Heart right ventricle (tissue), 16 donors: ENCODE measurements at regions of chr5 and their contacts with region 1.

Region 1: DNA sequence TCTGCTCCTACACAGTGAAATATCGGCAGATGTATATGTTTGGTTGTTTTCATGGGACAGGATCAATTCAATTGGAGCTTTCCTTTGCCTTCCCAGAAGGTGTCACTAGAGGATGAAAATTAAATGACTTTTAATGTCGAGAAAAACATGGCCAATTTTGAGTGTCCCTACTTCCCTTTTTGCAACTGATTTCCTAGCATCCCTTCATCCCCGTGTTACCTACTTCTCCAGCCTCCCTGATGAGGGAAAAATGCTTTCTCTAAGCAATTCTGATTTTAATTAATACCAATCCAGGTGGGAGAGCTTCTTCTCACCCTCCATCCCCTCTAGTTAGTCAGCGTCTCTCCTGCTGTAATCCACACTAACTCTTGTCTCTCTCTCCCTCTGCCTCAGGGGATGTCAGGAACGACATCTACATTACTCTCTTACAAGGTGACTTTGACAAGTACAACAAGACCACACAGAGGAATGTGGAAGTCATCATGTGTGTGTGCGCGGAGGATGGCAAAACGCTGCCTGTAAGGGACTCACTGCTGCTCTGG is 64.9 kb downstream of the DOCK2 start:
- DNase-seq: no peak
- ATAC-seq: peak in 2 of 8 donors; percentile 42 to 50
- H3K4me3 ChIP-seq: no peak overlapping the region
- H3K27ac ChIP-seq: no peak overlapping the region
- H3K4me1 ChIP-seq: peaks cover 0 to 4% (median 0%) of the 10 kb centered on the region in 9 donors
- H3K27me3 ChIP-seq: peaks cover 0 to 6% (median 0%) of the 10 kb centered on the region in 7 donors
- CTCF ChIP-seq: peak; percentile 17 to 64 (median 48)

Region 2: GRCh38 chr5:169567079-169567478 is 134.9 kb before region 1 on chr5:
- intact Hi-C with region 1: no loop called
- DNase-seq: no peak
- ATAC-seq: no peak
- H3K4me3 ChIP-seq: no peak overlapping the region
- H3K27ac ChIP-seq: no peak overlapping the region
- H3K4me1 ChIP-seq: no peaks in the 10 kb centered on the region
- H3K27me3 ChIP-seq: peaks cover 0 to 65% (median 15%) of the 10 kb centered on the region in 7 donors
- CTCF ChIP-seq: no peak

Region 3: DNA sequence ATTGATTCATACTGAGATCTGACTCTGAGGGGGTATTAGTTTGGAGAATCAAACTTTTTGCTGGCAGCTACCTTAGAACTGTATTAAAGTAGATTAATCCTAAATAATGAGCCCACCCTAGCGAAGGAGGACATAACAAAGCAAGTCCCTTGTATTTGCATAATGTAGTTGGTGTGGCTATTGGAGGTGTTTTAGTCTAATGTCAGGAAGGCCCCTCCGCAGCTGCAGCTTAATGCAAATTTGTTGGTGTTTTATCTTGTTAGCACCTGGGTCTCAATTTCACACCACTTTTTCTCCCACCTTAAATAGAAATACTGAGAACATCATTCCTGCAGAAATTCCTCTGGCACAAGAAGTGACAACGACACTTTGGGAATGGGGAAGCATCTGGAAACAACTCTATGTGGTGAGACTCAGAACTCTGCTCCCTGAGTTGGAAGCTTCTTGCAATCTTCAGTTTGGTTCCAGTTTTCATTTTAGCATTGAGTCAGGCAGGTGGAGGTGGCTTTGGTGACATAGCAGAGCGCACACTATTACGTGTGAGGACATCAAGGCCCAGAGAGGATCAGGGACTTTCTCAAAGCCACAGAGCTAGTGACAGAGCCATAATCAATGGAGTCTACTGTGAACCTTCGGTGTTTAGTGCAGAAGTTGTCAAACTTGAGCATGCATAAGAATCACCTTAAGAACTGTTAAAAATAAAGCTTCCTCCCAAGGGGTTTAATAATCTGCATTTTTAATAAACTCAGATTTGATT is 31.0 kb before region 1 on chr5:
- intact Hi-C with region 1: loop called in 1 of 10 experiments (anchors 2 kb)
- DNase-seq: no peak
- ATAC-seq: no peak
- H3K4me3 ChIP-seq: no peak overlapping the region
- H3K27ac ChIP-seq: no peak overlapping the region
- H3K4me1 ChIP-seq: no peaks in the 10 kb centered on the region
- H3K27me3 ChIP-seq: peaks cover 0 to 6% (median 0%) of the 10 kb centered on the region in 7 donors
- CTCF ChIP-seq: no peak

Region 4: DNA sequence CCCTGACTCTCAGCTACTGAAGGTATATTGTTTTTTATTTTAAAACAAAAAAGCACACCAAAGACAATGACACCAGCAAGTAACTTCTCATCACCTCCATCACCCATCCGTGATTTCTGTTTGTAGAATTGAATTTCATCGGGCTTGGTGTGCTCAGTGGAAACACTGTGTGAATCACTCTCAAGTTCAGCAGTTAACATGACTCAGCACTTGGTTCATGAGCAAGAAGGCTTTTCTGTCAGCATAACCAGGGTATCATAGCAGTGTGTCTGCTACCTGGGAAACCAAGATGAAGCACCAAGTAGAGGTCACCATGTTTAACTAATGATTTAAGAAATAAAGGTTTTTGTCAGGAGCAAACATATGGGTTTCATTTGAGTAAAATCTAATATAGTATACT is 154.6 kb after region 1 on chr5:
- intact Hi-C with region 1: no loop called
- DNase-seq: no peak
- ATAC-seq: no peak
- H3K4me3 ChIP-seq: no peak overlapping the region
- H3K27ac ChIP-seq: no peak overlapping the region
- H3K4me1 ChIP-seq: no peaks in the 10 kb centered on the region
- H3K27me3 ChIP-seq: no peaks in the 10 kb centered on the region
- CTCF ChIP-seq: no peak

Region 5: DNA sequence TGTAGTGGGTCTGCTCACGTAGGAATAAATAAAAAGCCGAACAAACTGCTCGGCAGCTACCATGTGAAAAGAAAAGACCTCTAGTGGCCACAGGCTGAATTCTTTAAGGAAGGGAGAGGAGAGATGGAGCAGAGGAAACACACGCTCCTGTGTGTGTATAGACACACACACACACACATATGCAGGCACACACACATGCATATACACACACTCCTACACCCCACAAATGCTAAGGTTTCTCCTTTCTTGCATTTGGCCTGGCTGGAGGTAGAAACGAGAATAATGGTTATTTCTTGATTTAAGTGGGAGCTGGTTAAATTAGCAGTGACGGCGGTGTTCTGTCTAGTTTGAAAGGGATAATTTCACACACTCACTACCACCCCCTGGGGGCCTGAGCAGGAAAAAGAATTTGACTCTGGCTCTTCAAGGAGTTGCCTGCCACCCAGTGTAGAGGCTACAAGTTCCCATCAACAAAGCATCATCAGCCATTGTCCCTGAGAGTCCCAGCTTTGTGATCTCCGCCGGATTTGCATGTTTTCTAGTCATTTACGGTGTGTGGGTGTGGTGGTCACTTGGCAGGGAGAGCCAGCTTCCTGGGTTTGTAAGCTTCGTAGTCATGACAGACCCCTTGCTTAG is 278.6 kb after region 1 on chr5 and contains the start of gene INSYN2B:
- intact Hi-C with region 1: loop called in 7 of 10 experiments (anchors 1 to 5 kb)
- DNase-seq: peak; percentile 36 to 40
- ATAC-seq: peak; percentile 75 to 89 (median 86)
- H3K4me3 ChIP-seq: peak within 1 kb of the TSS in 7 of 10 donors; percentile 12 to 38 (median 25)
- H3K27ac ChIP-seq: peak within 1 kb of the TSS in 1 of 10 donors; percentile 41
- H3K4me1 ChIP-seq: peaks cover 0 to 9% (median 0%) of the 10 kb centered on the region in 9 donors
- H3K27me3 ChIP-seq: peaks cover 0 to 53% (median 23%) of the 10 kb centered on the region in 7 donors
- CTCF ChIP-seq: peak; percentile 11 to 65 (median 57)
- total RNA-seq, gene INSYN2B: 0.13 to 0.87 (median 0.19) TPM in 4 of 10 donors, not detected in the others

Region 6: GRCh38 chr5:170070556-170071412 is 368.8 kb after region 1 on chr5:
- intact Hi-C with region 1: loop called in 9 of 10 experiments (anchors 2 to 10 kb)
- DNase-seq: peak; percentile 9 to 43
- ATAC-seq: peak in 6 of 8 donors; percentile 38 to 73 (median 58)
- H3K4me3 ChIP-seq: no peak overlapping the region
- H3K27ac ChIP-seq: no peak overlapping the region
- H3K4me1 ChIP-seq: no peaks in the 10 kb centered on the region
- H3K27me3 ChIP-seq: peaks cover 0 to 24% (median 2%) of the 10 kb centered on the region in 7 donors
- CTCF ChIP-seq: peak; percentile 40 to 76 (median 72)

Region 7: GRCh38 chr5:170183816-170184687 is 482.1 kb after region 1 on chr5:
- intact Hi-C with region 1: loop called in 1 of 10 experiments (anchors 10 kb)
- DNase-seq: peak; percentile 42 to 58
- ATAC-seq: peak; percentile 74 to 92 (median 84)
- H3K4me3 ChIP-seq: no peak overlapping the region
- H3K27ac ChIP-seq: no peak overlapping the region
- H3K4me1 ChIP-seq: no peaks in the 10 kb centered on the region
- H3K27me3 ChIP-seq: peaks cover 0 to 3% (median 0%) of the 10 kb centered on the region in 7 donors
- CTCF ChIP-seq: peak; percentile 45 to 84 (median 75)